ENCODE measurements at regions of chr4 and their contacts with region 1.

Region 1: DNA sequence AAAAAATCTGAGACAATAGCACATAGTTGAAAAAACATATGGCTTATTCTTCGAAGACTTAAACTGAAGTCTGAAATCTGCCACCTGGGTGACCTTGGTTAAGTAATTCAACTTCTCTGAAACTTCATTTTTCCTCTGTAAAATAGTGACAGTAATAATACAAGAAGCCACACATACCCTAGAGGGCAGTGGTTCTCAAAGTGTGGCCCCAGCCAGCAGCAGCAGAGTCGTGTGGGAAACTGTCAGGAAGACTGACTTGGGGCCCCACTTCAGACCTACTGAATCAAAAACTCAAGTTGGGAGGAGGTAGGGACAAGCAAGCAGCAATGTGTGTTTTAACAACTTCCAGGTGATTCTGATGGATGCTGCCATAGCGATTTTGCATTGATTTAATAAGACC is 249.9 kb downstream of the HNRNPD start:
- DNase-seq: peak in 6 of 9 donors; percentile 22 to 49 (median 28)
- ATAC-seq: peak; percentile 47
- H3K4me3 ChIP-seq: no peak overlapping the region
- H3K4me3 Mint-ChIP-seq: peak overlapping the region in 3 of 10 donors; percentile 2 to 29 (median 5)
- H3K27ac ChIP-seq: no peak overlapping the region
- H3K27ac Mint-ChIP-seq: peak overlapping the region in 2 of 9 donors; percentile 40 to 80
- H3K4me1 ChIP-seq: no peaks in the 10 kb centered on the region
- H3K4me1 Mint-ChIP-seq: peaks cover 0 to 17% (median 5%) of the 10 kb centered on the region in 7 donors
- H3K27me3 ChIP-seq: no peaks in the 10 kb centered on the region
- H3K27me3 Mint-ChIP-seq: peaks cover 0 to 3% (median 0%) of the 10 kb centered on the region in 5 donors

Region 2: DNA sequence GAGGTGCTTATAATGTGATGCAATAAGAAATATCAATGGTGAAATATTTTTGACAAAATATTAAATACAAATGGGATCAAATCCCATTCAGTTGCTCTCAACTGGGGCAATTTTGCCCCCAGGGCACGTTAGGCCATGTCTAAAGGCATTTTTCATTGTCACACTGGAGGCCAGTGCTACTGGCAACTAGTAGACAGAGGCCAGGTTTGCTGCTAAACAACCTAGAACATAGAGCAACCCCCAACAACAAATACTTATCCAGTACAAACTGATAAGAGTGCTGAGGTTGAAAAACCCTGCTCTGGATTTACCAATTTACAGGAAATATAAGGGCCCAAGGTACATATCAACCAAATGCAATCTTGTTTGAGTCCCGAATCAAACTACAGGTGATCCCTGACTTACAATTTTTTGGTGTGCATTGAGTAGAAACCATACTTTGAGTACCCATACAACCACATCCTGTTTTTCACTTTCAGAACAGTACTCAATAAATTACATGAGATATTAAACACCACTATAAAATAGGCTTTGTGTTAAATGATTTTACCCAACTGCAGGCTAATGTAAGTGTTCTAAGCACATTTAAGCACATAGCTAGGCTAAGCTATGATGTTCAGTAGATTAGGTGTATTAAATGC is 12.3 kb after region 1 on chr4:
- CTCF ChIA-PET with region 1: interaction called, 4 read pairs
- POLR2A ChIA-PET with region 1: no interaction called
- intact Hi-C with region 1: loop called in 1 of 2 experiments (anchors 1 kb)
- DNase-seq: peak in 6 of 9 donors; percentile 41 to 65 (median 48)
- ATAC-seq: peak; percentile 49
- H3K4me3 ChIP-seq: no peak overlapping the region
- H3K4me3 Mint-ChIP-seq: peak overlapping the region in 9 of 10 donors; percentile 0 to 80 (median 53)
- H3K27ac ChIP-seq: peak overlapping the region; percentile 30
- H3K27ac Mint-ChIP-seq: peak overlapping the region in 8 of 9 donors; percentile 71 to 98 (median 89)
- H3K4me1 ChIP-seq: peaks cover 7 to 19% of the 10 kb centered on the region in 2 donors
- H3K4me1 Mint-ChIP-seq: peaks cover 8 to 58% (median 24%) of the 10 kb centered on the region in 7 donors
- H3K27me3 ChIP-seq: no peaks in the 10 kb centered on the region
- H3K27me3 Mint-ChIP-seq: no peaks in the 10 kb centered on the region

Region 3: DNA sequence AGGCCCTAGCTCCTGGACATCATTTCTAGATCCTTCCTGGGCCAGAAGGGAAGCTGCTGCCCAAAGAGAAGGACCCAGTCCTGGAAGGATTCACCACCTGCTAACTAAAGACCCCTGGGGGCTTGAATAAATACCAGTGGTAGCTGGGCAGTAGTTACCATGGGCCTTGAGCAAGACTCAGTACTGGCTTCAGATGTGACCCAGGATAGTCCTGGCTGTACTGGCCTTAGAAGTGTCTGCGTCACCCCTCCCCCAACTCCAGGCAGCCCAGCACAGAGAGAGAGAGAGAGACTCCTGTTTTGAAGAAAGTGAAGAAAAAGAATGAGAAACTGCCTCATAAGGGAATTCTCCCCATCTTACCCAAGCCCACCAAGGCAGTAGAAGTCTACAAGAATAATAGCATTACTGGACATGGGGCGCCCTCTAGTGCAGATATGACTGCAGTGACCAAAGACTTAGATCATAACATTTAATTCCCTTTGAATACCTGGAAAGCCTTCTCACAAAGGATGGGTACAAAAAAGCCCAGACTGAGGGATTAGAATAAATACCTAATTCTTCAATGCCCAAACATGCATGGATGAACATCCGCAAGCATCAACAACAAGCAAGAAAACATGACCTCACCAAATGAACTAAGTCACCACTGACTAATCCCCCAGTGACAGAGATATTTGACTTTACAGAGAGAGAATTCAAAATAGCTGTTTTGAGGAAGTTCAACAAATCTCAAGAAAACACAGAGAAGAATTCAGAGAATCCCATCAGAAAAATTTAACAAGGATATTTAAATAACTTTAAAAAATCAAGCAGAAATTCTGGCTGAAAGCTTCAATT is 78.1 kb after region 1 on chr4:
- CTCF ChIA-PET with region 1: interaction called, 6 read pairs
- POLR2A ChIA-PET with region 1: no interaction called
- intact Hi-C with region 1: loop called in 1 of 2 experiments (anchors 1 kb)
- DNase-seq: peak in 7 of 9 donors; percentile 30 to 54 (median 40)
- ATAC-seq: peak; percentile 70
- H3K4me3 ChIP-seq: no peak overlapping the region
- H3K4me3 Mint-ChIP-seq: no peak overlapping the region
- H3K27ac ChIP-seq: no peak overlapping the region
- H3K27ac Mint-ChIP-seq: no peak overlapping the region
- H3K4me1 ChIP-seq: no peaks in the 10 kb centered on the region
- H3K4me1 Mint-ChIP-seq: peaks cover 0 to 17% (median 3%) of the 10 kb centered on the region in 7 donors
- H3K27me3 ChIP-seq: peaks cover 0 to 4% of the 10 kb centered on the region in 2 donors
- H3K27me3 Mint-ChIP-seq: peaks cover 0 to 18% (median 0%) of the 10 kb centered on the region in 5 donors

Region 4: GRCh38 chr4:82217986-82218715 is 94.2 kb after region 1 on chr4:
- CTCF ChIA-PET with region 1: interaction called, 8 read pairs
- POLR2A ChIA-PET with region 1: no interaction called
- intact Hi-C with region 1: loop called in 1 of 2 experiments (anchors 1 kb)
- DNase-seq: peak in 7 of 9 donors; percentile 2 to 36 (median 14)
- ATAC-seq: peak; percentile 50
- H3K4me3 ChIP-seq: no peak overlapping the region
- H3K4me3 Mint-ChIP-seq: no peak overlapping the region
- H3K27ac ChIP-seq: no peak overlapping the region
- H3K27ac Mint-ChIP-seq: no peak overlapping the region
- H3K4me1 ChIP-seq: peaks cover 10 to 12% of the 10 kb centered on the region in 2 donors
- H3K4me1 Mint-ChIP-seq: peaks cover 9 to 53% (median 38%) of the 10 kb centered on the region in 7 donors
- H3K27me3 ChIP-seq: no peaks in the 10 kb centered on the region
- H3K27me3 Mint-ChIP-seq: peaks cover 0 to 14% (median 0%) of the 10 kb centered on the region in 5 donors

Region 5: DNA sequence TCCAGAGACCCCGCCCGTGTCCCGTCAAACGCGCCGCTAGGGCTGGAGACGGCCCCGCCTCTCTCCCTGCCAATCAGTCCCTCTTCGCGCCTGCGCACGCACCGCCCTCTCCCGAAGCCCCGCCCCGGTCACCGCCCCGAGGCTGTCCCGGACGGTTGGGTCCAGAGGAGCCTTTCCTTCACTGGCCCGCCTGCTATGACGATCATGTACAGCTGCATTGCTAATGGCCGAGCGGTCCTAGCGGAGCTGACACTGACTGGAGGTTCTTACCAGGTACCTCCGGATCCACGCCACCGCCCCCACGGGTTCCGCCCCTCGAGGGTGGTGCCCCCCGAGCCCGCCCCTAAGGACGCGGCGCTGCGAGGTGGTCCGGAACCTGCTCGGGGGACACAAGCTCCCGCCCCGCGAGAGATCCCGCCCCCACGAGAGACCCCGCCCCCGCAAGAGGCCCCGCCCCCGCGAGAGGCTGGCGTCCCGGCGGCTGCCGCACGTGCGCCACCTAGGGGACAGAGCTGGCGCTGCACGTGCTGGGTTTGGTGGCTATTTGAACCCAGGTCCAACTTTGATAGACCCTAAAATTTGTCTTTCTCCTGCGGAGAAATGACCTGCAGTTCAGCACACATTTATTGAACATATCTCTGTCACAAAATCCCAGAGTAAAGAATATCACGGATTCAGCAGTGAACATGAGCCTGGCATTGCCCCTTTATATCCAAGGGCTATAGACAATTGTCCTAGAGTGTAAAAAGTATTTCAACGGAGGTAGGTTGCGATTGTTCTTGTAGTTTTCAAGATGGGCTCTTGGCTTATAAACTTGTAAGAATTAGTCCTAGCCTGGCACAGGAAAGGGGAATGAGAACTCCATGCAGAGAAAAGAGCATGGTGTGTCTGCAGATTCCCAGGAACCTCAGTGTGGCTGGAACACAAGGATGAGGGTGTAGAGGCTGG is 161.2 kb after region 1 on chr4:
- CTCF ChIA-PET with region 1: interaction called, 3 read pairs
- POLR2A ChIA-PET with region 1: no interaction called
- intact Hi-C with region 1: loop called in 1 of 2 experiments (anchors 1 kb)
- DNase-seq: peak; percentile 97 to 100 (median 99)
- ATAC-seq: peak; percentile 94
- H3K4me3 ChIP-seq: peak overlapping the region; percentile 55
- H3K4me3 Mint-ChIP-seq: peak overlapping the region; percentile 70 to 91 (median 86)
- H3K27ac ChIP-seq: peak overlapping the region; percentile 71
- H3K27ac Mint-ChIP-seq: peak overlapping the region; percentile 53 to 94 (median 83)
- H3K4me1 ChIP-seq: peaks cover 4 to 11% of the 10 kb centered on the region in 2 donors
- H3K4me1 Mint-ChIP-seq: peaks cover 9 to 22% (median 13%) of the 10 kb centered on the region in 7 donors
- H3K27me3 ChIP-seq: no peaks in the 10 kb centered on the region
- H3K27me3 Mint-ChIP-seq: peaks cover 0 to 28% (median 0%) of the 10 kb centered on the region in 5 donors

Region 6: DNA sequence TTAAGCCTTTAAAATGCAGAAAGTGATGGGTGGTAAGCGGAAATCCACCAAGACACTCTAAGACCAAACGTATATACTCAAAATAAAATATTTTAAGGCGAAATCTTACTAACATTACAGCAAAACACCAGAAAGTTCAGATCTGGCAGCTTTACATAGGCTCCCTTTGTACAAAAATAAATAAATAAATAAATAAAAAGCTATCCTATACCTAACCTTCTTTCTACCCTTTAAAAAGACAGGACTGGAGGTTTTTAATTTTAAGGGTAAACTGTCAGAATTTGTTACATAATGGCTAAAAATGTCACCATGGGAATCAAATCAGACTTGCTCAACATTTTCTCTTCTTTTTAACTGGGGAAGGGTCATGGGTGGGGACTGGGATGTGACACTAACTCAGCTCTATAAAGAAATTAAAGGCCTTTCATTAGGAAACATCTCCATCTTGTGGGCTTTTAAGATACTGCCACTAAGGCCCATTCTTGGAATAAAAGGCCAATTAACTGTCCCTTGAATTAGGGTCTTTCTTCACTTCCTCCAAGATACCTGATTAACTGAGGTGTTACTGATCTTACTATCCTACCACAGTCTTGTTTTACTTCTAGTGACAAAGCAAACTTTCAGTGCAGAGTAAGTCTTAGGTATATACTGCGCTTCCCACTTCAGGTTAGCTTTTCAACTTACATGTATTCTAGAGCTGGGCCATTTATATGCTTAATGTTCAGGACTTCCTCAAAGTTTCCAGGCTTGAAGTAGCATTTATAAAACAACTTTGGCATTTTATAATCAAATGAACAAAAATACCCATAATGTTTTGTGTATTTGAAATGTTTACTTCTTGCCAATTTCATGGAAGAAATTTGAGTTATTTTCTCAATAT is 236.6 kb after region 1 on chr4:
- CTCF ChIA-PET with region 1: interaction called, 3 read pairs
- POLR2A ChIA-PET with region 1: no interaction called
- intact Hi-C with region 1: loop called in 1 of 2 experiments (anchors 1 kb)
- DNase-seq: peak in 6 of 9 donors; percentile 17 to 33 (median 31)
- ATAC-seq: peak; percentile 70
- H3K4me3 ChIP-seq: no peak overlapping the region
- H3K4me3 Mint-ChIP-seq: peak overlapping the region in 7 of 10 donors; percentile 0 to 56 (median 36)
- H3K27ac ChIP-seq: peak overlapping the region; percentile 18
- H3K27ac Mint-ChIP-seq: peak overlapping the region in 8 of 9 donors; percentile 34 to 85 (median 54)
- H3K4me1 ChIP-seq: peaks cover 62 to 74% of the 10 kb centered on the region in 2 donors
- H3K4me1 Mint-ChIP-seq: peaks cover 64 to 98% (median 89%) of the 10 kb centered on the region in 7 donors
- H3K27me3 ChIP-seq: no peaks in the 10 kb centered on the region
- H3K27me3 Mint-ChIP-seq: no peaks in the 10 kb centered on the region

Region 7: DNA sequence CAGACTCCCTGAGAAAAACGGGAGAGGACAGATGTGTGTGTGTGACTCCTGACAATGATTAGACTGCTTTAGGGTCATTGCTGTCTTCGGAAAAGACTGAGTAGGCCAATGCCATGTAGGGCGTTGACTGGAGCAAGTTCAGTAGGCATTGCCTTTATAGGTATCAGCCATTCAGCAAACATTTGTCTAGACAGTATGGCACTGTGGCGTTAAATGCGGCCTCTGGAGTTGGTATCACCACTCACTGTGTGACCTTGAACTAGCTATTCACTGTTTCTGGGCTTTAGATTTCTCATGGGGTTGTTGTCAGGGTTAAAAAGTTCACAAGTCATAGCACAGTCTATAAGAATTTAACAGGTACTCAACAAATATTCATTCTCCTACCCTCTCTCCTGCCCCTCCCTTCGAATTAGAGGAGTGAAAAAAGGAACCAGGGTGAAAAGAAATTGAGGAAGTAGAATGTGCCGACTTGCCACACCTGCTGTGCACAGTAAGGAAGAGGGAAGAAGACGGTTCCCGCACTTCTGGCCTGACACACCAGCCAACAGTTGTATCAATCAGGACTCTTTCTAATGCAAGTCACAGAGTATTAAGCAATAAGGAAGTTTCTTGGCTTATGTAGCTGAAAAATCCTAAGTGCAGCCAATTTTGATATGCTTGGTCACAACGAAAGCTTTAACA is 1073.8 kb after region 1 on chr4:
- CTCF ChIA-PET with region 1: no interaction called
- POLR2A ChIA-PET with region 1: no interaction called
- intact Hi-C with region 1: no loop called
- DNase-seq: no peak
- ATAC-seq: peak; percentile 76
- H3K4me3 ChIP-seq: no peak overlapping the region
- H3K4me3 Mint-ChIP-seq: no peak overlapping the region
- H3K27ac ChIP-seq: no peak overlapping the region
- H3K27ac Mint-ChIP-seq: peak overlapping the region in 1 of 9 donors; percentile 11
- H3K4me1 ChIP-seq: no peaks in the 10 kb centered on the region
- H3K4me1 Mint-ChIP-seq: peaks cover 5 to 12% (median 7%) of the 10 kb centered on the region in 7 donors
- H3K27me3 ChIP-seq: no peaks in the 10 kb centered on the region
- H3K27me3 Mint-ChIP-seq: no peaks in the 10 kb centered on the region